Dorsolateral prefrontal cortex (tissue), 120 donors: ENCODE measurements at regions of chr15 and their contacts with region 1.

Region 1: GRCh38 chr15:41557673-41558399 is 1.2 kb upstream of the TYRO3 start:
- DNase-seq: peak; percentile 77 to 89 (median 86)
- H3K4me3 ChIP-seq: peak overlapping the region in 57 of 59 donors; percentile 4 to 89 (median 78)
- H3K27ac ChIP-seq: peak overlapping the region; percentile 76 to 99 (median 95)
- H3K27me3 ChIP-seq: no peaks in the 10 kb centered on the region
- CTCF ChIP-seq: peak; percentile 68 to 96 (median 89)

Region 2: DNA sequence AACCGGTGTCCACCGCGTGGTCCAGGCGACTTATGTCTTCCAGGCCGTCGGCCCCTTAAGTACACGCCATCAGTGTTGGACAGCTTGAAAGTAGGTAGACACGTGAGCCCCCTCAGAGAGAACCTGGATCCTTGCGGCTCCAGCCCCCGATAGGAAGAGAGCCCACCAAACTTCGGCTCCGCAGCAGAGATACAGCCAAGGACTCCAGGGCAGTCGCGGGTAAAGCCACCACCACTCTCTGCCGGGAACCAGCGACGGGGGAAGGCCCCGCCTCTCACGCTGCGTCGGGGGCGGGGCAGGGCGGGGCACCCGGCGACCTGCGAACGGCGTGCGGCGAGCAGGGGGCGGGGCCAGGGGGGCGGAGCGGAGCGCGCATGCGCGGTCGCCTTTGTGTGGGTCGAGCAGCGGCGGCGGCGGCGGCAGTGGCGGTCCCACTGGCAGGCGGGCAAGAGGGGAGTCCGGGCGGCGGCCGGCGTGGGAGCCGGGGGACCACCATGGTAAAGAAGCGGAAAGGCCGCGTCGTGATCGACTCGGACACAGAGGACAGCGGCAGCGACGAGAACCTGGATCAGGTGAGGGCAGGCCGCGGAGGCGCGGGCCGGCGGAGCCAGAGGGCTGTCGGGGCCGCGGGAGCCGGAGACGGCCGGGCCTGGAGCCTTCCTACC is 141.0 kb before region 1 on chr15 and contains the start of gene RTF1:
- intact Hi-C with region 1: loop called in 1 of 2 experiments (anchors 10 kb)
- DNase-seq: peak; percentile 87 to 98 (median 92)
- H3K4me3 ChIP-seq: peak within 1 kb of the TSS; percentile 64 to 100 (median 98)
- H3K27ac ChIP-seq: peak within 1 kb of the TSS in 57 of 59 donors; percentile 7 to 95 (median 83)
- H3K27me3 ChIP-seq: no peaks in the 10 kb centered on the region
- CTCF ChIP-seq: peak in 20 of 56 donors; percentile 0 to 45 (median 23)
- total RNA-seq, gene RTF1: 17.2 to 72.4 (median 43.7) TPM

Region 3: DNA sequence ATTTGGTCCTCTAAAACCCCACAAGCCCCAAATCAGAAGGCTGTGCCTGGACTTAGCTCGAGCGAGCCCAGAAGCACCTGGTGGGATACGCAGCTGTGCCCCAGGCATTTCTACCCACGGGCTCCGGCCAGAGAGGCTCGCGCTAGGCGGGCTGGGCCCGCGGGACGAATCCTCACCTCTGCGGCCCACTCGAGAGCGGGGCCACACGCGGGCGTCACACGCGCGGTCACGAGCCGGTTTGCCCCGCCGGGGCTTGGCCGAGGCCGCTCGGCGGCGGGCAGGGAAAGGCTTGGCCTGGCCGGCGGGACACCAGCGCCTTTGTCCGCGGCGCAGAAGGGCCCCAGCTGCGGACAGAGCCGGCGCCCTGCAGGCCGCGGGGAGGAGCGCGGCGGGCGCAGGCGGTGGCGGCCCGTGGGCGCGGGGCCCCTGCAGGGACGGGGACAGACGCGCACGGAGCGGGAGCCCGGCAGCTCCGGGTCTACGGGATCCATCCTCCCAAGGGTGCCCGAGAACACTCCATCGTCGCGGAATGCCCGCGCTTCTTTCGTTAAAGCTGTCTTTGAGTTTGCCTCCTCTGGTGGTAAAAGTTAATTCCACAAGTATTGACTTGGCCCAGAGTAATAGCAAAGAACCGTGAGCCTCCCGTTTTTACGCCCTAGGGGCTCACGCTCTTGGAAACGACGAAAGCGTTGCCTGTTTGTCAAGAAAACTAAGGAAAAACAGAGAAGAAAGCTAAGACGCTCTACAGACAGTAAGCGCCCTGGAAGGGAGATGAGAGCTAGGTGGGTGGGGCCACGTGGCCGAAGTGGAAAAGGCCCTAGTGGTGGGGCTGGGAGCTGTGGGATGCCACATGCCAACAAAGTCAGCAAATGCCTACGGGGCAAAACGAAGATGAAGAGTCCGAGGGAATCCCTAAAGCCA is 27.6 kb after region 1 on chr15:
- intact Hi-C with region 1: loop called in 1 of 2 experiments (anchors 1 kb)
- DNase-seq: peak in 9 of 10 donors; percentile 54 to 77 (median 58)
- H3K4me3 ChIP-seq: peak overlapping the region; percentile 10 to 72 (median 56)
- H3K27ac ChIP-seq: peak overlapping the region; percentile 43 to 97 (median 92)
- H3K27me3 ChIP-seq: no peaks in the 10 kb centered on the region
- CTCF ChIP-seq: peak in 49 of 56 donors; percentile 16 to 67 (median 41)

Region 4: DNA sequence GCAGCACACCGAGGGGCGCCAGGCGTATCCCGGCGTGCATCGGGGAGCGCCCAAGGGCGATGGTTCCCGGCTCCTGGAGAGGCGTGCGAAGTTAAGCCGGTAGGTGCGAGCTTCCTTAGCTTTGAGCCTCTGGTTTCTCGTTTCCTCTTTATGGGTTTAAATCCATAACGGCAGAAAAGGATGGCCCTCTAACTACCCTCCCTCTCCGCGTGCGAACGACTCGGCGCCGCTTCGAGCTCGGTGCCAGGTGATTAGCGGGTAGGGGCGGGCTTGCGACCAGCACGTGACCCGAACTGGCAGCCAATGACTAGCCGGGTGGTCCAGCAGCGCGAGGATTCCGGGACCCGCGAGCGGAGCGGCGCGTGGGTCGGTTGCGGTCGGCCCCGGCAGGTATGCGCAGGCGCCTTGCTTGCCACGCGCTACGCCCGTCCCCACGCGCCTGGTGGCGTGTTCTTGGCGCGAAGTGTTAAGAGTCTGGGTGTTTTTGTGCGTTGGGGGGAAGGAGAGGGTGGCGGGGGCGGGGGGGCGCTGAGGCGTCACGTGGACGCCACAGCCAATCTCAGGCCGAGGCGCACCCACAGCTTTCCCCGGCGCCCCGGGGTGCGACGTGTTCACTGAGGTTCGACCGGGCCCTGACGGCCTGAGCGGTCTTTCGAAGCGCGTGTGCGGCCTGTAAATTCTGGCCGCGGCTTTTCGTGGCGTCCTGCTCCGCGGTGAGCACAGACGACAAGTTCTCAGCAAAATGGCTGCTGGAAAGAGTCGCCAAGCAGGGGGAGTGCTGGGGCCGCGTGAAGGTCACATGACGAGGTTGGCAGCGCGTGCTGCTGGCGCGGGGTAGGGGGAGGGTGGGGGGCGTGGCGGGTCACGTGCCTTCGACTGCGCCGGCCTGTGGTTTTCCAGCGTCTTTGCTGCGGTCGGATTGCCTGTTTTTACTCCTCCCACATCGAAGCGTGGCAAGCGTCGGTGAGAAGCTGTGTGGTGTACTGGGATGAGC is 63.7 kb after region 1 on chr15:
- intact Hi-C with region 1: loop called (anchors 1 to 5 kb)
- DNase-seq: peak; percentile 76 to 91 (median 86)
- H3K4me3 ChIP-seq: peak overlapping the region; percentile 37 to 89 (median 73)
- H3K27ac ChIP-seq: peak overlapping the region; percentile 74 to 98 (median 95)
- H3K27me3 ChIP-seq: no peaks in the 10 kb centered on the region
- CTCF ChIP-seq: peak in 12 of 56 donors; percentile 6 to 24 (median 17)

Region 5: DNA sequence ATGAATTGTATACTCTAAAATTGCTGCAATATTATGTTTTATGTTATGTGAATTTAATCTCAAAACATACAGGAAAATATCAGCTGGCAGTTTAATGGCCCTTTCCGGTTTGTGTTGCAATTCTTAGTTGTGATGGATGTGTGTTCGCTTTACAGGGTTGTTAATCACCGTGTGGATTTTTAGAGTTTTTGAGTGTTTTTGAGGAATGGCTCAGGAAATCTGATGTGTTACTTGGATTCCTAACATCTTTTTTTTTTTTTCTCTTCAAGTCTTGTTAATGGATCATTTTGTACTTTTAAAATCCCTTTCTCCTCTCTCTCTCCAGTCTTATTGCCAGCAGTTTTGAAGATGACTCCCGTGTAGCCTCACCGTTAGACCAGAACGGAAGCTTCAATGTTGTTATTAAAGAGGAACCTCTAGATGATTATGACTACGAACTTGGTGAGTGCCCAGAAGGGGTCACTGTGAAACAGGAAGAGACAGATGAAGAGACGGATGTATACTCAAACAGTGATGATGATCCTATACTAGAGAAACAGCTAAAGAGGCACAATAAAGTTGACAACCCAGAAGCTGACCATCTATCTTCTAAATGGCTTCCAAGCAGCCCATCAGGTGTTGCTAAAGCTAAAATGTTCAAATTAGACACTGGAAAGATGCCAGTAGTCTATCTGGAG is 138.1 kb after region 1 on chr15:
- intact Hi-C with region 1: no loop called
- DNase-seq: peak in 1 of 10 donors; percentile 32
- H3K4me3 ChIP-seq: peak overlapping the region in 4 of 59 donors; percentile 0 to 16 (median 3)
- H3K27ac ChIP-seq: peak overlapping the region in 31 of 59 donors; percentile 0 to 74 (median 39)
- H3K27me3 ChIP-seq: no peaks in the 10 kb centered on the region
- CTCF ChIP-seq: peak in 41 of 56 donors; percentile 2 to 55 (median 33)

Region 6: GRCh38 chr15:41774062-41774881 is 216.4 kb after region 1 on chr15 and contains the start of gene MAPKBP1:
- intact Hi-C with region 1: loop called (anchors 1 to 2 kb)
- DNase-seq: peak; percentile 94 to 98 (median 96)
- H3K4me3 ChIP-seq: peak within 1 kb of the TSS; percentile 58 to 95 (median 86)
- H3K27ac ChIP-seq: peak within 1 kb of the TSS; percentile 70 to 97 (median 91)
- H3K27me3 ChIP-seq: no peaks in the 10 kb centered on the region
- CTCF ChIP-seq: peak; percentile 57 to 92 (median 76)
- total RNA-seq, gene MAPKBP1: 50.5 to 136 (median 77.6) TPM

Region 7: DNA sequence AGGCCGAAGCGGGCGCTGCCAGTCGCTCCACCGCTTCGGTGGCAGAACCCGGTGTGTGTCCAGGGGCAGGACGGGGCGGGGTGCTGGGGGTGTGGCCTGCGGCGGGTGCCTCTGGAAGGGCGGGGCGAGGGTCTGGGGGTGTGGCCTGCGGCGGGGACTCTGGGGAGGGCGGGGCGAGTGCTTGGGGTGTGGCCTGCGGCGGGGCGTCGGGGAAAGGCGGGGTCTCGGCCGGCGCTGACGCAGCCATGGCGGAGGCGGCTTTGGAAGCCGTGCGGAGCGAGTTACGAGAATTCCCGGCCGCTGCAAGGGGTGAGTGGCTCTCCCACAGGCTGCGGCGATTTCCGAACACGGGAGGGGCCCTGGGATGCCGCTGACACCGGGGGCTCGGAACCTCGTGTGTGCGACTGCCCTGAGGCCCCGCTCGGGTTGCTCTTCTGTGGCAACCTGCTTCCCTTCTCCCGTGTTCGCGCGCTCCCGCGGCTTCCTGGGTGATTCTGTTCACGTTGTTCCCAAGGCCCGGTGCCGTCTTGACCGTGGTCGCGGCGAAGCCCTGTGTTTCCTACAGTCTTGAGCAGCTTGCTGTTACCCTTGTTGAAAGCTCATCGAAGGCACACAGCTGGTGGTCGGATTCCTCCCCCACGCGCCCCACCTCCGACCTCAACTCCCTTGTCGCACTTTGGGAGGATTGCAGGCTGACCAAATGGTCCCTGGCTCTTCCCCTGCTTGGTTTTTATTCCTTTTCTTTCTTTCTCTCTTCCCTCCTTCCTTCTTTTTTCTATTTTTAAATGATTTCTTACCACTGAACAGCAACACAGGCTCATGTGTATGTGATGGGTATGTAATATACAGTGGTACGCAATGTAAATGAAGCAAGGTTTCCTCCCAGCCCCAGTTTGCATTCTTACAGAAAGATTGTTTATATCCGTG is 270.3 kb after region 1 on chr15 and contains the start of gene JMJD7:
- intact Hi-C with region 1: loop called in 1 of 2 experiments (anchors 5 kb)
- DNase-seq: peak; percentile 84 to 97 (median 92)
- H3K4me3 ChIP-seq: peak within 1 kb of the TSS; percentile 58 to 99 (median 87)
- H3K27ac ChIP-seq: peak within 1 kb of the TSS; percentile 55 to 95 (median 84)
- H3K27me3 ChIP-seq: no peaks in the 10 kb centered on the region
- CTCF ChIP-seq: peak in 13 of 56 donors; percentile 6 to 44 (median 21)
- total RNA-seq, gene JMJD7: 13.4 to 55.9 (median 25.6) TPM